ENCODE measurements at regions of chr10 and their contacts with region 1.

Region 1: DNA sequence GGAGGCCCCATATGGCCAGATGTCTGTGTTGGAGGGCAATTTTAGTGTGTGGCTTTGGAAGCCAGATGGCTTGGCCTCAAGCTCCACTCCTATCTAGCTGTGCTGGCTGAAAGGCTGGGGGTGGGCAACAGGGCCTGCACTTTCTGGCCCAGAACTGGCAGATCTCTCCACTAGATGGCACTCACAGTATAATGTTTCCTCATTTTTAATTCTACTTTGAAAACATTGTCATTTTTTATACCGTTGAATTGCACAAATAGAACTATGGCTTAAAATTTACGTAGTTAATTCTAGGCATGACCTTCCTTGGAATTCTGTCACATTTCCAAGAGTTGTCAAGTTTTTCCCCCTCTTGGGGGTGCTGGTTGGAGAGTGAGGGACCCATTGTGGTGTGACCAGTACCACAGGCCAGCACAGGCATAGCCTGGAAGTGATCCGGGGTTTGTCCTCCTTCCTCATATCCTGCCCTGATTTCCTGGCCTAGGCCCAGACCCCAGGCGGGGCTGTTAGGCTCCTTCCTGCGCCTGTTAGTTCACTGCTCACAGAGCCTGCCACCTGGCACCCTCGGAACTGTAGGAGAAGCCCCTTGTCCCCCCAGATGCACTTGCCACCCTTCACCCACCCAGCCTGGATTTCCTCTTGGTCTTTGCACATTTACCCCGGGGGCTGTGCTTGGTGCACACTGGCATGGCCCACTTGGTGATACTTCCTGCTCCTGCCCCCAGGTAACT is 52.8 kb downstream of the ARHGAP22 start:
- DNase-seq: peak; percentile 27
- ATAC-seq: peak; percentile 89
- H3K4me3 Mint-ChIP-seq: no peak overlapping the region
- H3K27ac Mint-ChIP-seq: no peak overlapping the region
- H3K4me1 Mint-ChIP-seq: peaks cover 11% of the 10 kb centered on the region
- H3K27me3 Mint-ChIP-seq: peaks cover 5% of the 10 kb centered on the region
- CTCF ChIP-seq: no peak

Region 2: GRCh38 chr10:48363617-48364355 is 188.2 kb before region 1 on chr10:
- CTCF ChIA-PET with region 1: interaction called, 14 read pairs
- POLR2A ChIA-PET with region 1: no interaction called
- intact Hi-C with region 1: loop called (anchors 1 kb)
- DNase-seq: no peak
- ATAC-seq: no peak
- H3K4me3 Mint-ChIP-seq: no peak overlapping the region
- H3K27ac Mint-ChIP-seq: no peak overlapping the region
- H3K4me1 Mint-ChIP-seq: peaks cover 3% of the 10 kb centered on the region
- H3K27me3 Mint-ChIP-seq: no peaks in the 10 kb centered on the region
- CTCF ChIP-seq: no peak

Region 3: GRCh38 chr10:48526011-48526821 is 25.8 kb before region 1 on chr10:
- CTCF ChIA-PET with region 1: no interaction called
- POLR2A ChIA-PET with region 1: no interaction called
- intact Hi-C with region 1: no loop called
- DNase-seq: no peak
- ATAC-seq: no peak
- H3K4me3 Mint-ChIP-seq: no peak overlapping the region
- H3K27ac Mint-ChIP-seq: no peak overlapping the region
- H3K4me1 Mint-ChIP-seq: peaks cover 2% of the 10 kb centered on the region
- H3K27me3 Mint-ChIP-seq: peaks cover 42% of the 10 kb centered on the region
- CTCF ChIP-seq: no peak

Region 4: DNA sequence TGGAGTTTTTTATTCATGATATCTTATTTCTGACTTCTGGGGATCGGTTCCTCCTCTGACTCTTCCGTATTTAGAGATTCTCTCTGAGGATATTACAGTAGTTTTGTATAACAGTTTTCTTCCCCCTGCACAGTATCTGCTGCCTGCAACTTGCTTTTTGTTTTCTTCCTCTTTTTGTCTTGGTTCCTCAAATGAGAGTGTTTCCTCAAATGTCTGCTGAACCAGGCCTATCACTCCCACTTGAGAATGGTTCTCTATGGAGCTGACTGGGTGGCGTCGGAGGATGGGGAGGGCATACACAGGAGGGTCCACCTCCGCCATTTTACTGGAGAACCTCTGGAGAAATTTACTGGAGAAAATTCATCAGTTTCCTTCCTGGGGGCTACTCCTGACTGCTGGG is 25.1 kb after region 1 on chr10:
- CTCF ChIA-PET with region 1: interaction called, 5 read pairs
- POLR2A ChIA-PET with region 1: no interaction called
- intact Hi-C with region 1: loop called (anchors 1 kb)
- DNase-seq: no peak
- ATAC-seq: peak; percentile 65
- H3K4me3 Mint-ChIP-seq: peak overlapping the region; percentile 41
- H3K27ac Mint-ChIP-seq: peak overlapping the region; percentile 82
- H3K4me1 Mint-ChIP-seq: peaks cover 92% of the 10 kb centered on the region
- H3K27me3 Mint-ChIP-seq: no peaks in the 10 kb centered on the region
- CTCF ChIP-seq: no peak

Region 5: GRCh38 chr10:48614481-48615390 is 62.7 kb after region 1 on chr10:
- CTCF ChIA-PET with region 1: interaction called, 16 read pairs
- POLR2A ChIA-PET with region 1: interaction called, 4 read pairs
- intact Hi-C with region 1: no loop called
- DNase-seq: no peak
- ATAC-seq: peak; percentile 52
- H3K4me3 Mint-ChIP-seq: no peak overlapping the region
- H3K27ac Mint-ChIP-seq: no peak overlapping the region
- H3K4me1 Mint-ChIP-seq: peaks cover 17% of the 10 kb centered on the region
- H3K27me3 Mint-ChIP-seq: peaks cover 17% of the 10 kb centered on the region
- CTCF ChIP-seq: no peak

Region 6: GRCh38 chr10:48701139-48701901 is 149.3 kb after region 1 on chr10:
- CTCF ChIA-PET with region 1: interaction called, 3 read pairs
- POLR2A ChIA-PET with region 1: no interaction called
- intact Hi-C with region 1: loop called (anchors 5 kb)
- DNase-seq: no peak
- ATAC-seq: peak; percentile 44
- H3K4me3 Mint-ChIP-seq: peak overlapping the region; percentile 26
- H3K27ac Mint-ChIP-seq: peak overlapping the region; percentile 80
- H3K4me1 Mint-ChIP-seq: peaks cover 98% of the 10 kb centered on the region
- H3K27me3 Mint-ChIP-seq: no peaks in the 10 kb centered on the region
- CTCF ChIP-seq: no peak

Region 7: GRCh38 chr10:49518982-49519578 is 967.1 kb after region 1 on chr10:
- CTCF ChIA-PET with region 1: no interaction called
- POLR2A ChIA-PET with region 1: no interaction called
- intact Hi-C with region 1: loop called (anchors 10 kb)
- DNase-seq: no peak
- ATAC-seq: peak; percentile 66
- H3K4me3 Mint-ChIP-seq: no peak overlapping the region
- H3K27ac Mint-ChIP-seq: no peak overlapping the region
- H3K4me1 Mint-ChIP-seq: peaks cover 7% of the 10 kb centered on the region
- H3K27me3 Mint-ChIP-seq: no peaks in the 10 kb centered on the region
- CTCF ChIP-seq: no peak